OCI-LY7 (cell line): ENCODE measurements at regions of chr16 and their contacts with region 1.

Region 1: GRCh38 chr16:89171463-89172170 is at the start of gene CDH15:
- DNase-seq: peak; percentile 97
- H3K4me3 ChIP-seq: peak within 1 kb of the TSS; percentile 34
- H3K27ac ChIP-seq: no peak within 1 kb of the TSS
- H3K4me1 ChIP-seq: peaks cover 25% of the 10 kb centered on the region
- CTCF ChIP-seq: no peak
- total RNA-seq, gene CDH15: not detected in 2 replicates

Region 2: GRCh38 chr16:88737298-88738150 is 434.1 kb before region 1 on chr16:
- CTCF ChIA-PET with region 1: no interaction called
- POLR2A ChIA-PET with region 1: no interaction called
- intact Hi-C with region 1: loop called (anchors 5 kb)
- DNase-seq: peak; percentile 82
- H3K4me3 ChIP-seq: no peak overlapping the region
- H3K27ac ChIP-seq: no peak overlapping the region
- H3K4me1 ChIP-seq: peaks cover 18% of the 10 kb centered on the region
- CTCF ChIP-seq: peak; percentile 94

Region 3: GRCh38 chr16:88856828-88857733 is 314.5 kb before region 1 on chr16 and contains the starts of genes GALNS and TRAPPC2L:
- CTCF ChIA-PET with region 1: interaction called, 3 read pairs
- POLR2A ChIA-PET with region 1: no interaction called
- intact Hi-C with region 1: loop called (anchors 1 kb)
- DNase-seq: peak; percentile 99
- H3K4me3 ChIP-seq: peak within 1 kb of the TSS; percentile 83
- H3K27ac ChIP-seq: peak within 1 kb of the TSS; percentile 6
- H3K4me1 ChIP-seq: peaks cover 25% of the 10 kb centered on the region
- CTCF ChIP-seq: no peak
- total RNA-seq, gene GALNS: 17.2 and 18.5 TPM in 2 replicates
- total RNA-seq, gene TRAPPC2L: 27.3 and 27.6 TPM in 2 replicates

Region 4: GRCh38 chr16:89009311-89010209 is 162.1 kb before region 1 on chr16:
- CTCF ChIA-PET with region 1: no interaction called
- POLR2A ChIA-PET with region 1: no interaction called
- intact Hi-C with region 1: no loop called
- DNase-seq: peak; percentile 46
- H3K4me3 ChIP-seq: no peak overlapping the region
- H3K27ac ChIP-seq: no peak overlapping the region
- H3K4me1 ChIP-seq: peaks cover 3% of the 10 kb centered on the region
- CTCF ChIP-seq: no peak

Region 5: DNA sequence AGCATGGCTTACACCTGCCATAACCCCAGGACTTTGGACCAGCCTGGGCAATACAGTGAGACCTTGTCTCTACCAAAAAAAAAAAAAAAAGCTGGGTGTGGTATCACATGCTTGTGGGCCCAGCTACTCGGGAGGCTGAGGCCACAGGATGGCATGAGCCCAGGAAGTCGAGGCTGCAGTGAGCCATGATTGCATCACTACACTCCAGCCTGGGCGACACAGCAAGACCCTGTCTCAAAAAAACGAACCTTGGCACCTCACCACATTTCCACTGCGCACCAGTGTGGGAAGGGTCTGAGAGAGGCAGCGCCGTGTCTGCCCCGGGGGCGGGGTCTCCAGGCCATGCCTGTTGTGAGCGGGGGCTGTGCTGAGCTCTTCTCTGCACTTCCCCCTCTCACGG is 71.7 kb before region 1 on chr16:
- CTCF ChIA-PET with region 1: no interaction called
- POLR2A ChIA-PET with region 1: no interaction called
- intact Hi-C with region 1: loop called (anchors 5 kb)
- DNase-seq: peak; percentile 28
- H3K4me3 ChIP-seq: peak overlapping the region; percentile 99
- H3K27ac ChIP-seq: peak overlapping the region; percentile 98
- H3K4me1 ChIP-seq: peaks cover 53% of the 10 kb centered on the region
- CTCF ChIP-seq: no peak

Region 6: DNA sequence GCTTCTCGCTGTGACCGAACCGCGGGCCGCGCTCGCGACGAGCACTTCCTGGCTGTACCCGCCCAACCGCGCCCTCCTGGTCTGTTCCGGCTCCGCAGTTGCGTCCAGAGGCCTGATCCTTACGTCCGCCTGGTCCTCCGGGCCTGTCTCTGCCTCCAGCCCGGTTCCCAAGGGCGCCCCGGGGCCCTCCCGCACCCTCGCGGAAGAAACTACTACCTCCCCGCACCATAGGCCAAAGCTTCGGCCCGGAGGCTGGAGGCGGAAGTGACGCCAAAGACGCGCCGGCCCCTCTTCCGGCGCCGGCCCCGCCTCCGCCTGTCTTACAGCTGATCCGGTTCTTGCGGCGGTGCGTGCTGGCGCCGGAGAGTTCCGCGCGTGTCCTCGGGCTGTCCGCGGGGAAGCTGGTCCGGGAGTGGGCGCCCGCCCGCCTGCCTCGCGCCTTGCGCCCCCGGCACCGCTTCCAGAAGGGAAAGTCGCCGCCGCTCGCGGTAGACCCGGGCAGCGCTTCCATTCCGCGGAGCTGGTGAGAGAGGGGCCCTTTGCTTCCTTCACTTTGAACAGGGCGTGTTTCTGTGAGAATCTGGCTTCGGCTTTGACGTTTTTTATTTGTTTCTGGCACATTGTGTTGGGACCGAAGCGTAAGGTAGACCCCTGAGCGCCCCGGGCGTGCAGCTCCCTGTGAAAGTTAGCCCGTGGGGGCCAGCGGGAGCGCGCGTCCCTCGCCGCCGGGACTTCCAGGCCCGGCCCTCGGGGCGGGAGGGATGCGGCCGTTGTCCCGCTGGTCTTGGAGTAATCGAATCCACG is 46.0 kb after region 1 on chr16 and contains the start of gene ZNF778:
- CTCF ChIA-PET with region 1: no interaction called
- POLR2A ChIA-PET with region 1: no interaction called
- intact Hi-C with region 1: loop called (anchors 2 kb)
- DNase-seq: peak; percentile 86
- H3K4me3 ChIP-seq: peak within 1 kb of the TSS; percentile 99
- H3K27ac ChIP-seq: peak within 1 kb of the TSS; percentile 63
- H3K4me1 ChIP-seq: peaks cover 5% of the 10 kb centered on the region
- CTCF ChIP-seq: no peak
- total RNA-seq, gene ZNF778: 8.6 and 9.9 TPM in 2 replicates